ENCODE measurements at regions of chr21 and their contacts with region 1.

Region 1: GRCh38 chr21:33924079-33924765 is 8.6 kb upstream of the ATP5PO start:
- DNase-seq: peak; percentile 48 to 71
- H3K4me3 ChIP-seq: no peak overlapping the region
- H3K27ac ChIP-seq: no peak overlapping the region
- H3K4me1 ChIP-seq: no peaks in the 10 kb centered on the region
- H3K27me3 ChIP-seq: no peaks in the 10 kb centered on the region
- CTCF ChIP-seq: peak; percentile 85

Region 2: GRCh38 chr21:33959680-33960079 is 35.5 kb after region 1 on chr21:
- CTCF ChIA-PET with region 1: interaction called, 12 read pairs
- POLR2A ChIA-PET with region 1: no interaction called
- intact Hi-C with region 1: no loop called
- DNase-seq: no peak
- H3K4me3 ChIP-seq: no peak overlapping the region
- H3K27ac ChIP-seq: no peak overlapping the region
- H3K4me1 ChIP-seq: no peaks in the 10 kb centered on the region
- H3K27me3 ChIP-seq: no peaks in the 10 kb centered on the region
- CTCF ChIP-seq: no peak

Region 3: DNA sequence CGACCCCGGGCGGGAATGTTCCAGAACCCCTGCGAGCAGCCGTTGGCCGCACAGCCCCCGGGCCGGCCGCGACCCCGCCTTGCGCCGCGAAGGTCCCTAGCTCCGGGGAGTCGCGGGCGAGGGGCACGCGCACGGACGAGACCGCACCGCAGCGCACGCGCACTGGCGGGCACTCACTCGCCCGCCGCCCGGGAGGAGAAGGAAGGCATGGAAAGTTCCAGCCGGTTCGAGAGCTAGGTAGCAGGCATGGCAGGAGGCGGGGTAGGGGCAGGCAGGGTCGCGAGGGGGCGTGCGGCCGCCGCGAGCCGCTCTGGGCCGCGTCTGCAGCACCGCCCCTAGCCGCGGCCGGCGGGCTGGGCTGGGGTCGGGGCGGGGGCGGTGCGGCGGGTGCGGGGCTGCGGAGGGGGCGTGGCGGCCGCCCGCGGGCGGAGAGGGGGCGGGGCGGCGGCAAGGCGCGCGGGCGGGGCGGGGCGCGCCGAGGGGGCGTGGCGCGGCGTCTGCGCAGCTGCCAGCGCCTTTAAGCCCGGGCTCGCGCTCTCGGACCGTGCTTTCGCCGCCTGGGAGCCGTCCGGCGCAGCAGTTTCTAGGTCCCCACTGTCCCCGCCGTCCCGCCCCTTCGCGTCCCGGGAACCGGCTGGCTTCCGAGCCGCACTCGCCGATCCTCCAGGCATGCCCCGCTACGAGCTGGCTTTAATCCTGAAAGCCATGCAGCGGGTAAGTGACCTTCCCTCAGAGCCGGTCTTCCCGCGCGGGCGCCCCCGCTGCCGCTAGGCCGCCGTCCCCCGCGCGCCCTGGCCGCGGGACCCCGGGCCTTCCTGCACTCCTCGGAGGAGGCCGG is 149.0 kb after region 1 on chr21 and contains the starts of genes MRPS6 and SLC5A3:
- CTCF ChIA-PET with region 1: interaction called, 4 read pairs
- POLR2A ChIA-PET with region 1: no interaction called
- intact Hi-C with region 1: loop called (anchors 5 kb)
- DNase-seq: peak; percentile 61 to 79
- H3K4me3 ChIP-seq: peak within 1 kb of the TSS; percentile 84
- H3K27ac ChIP-seq: no peak within 1 kb of the TSS
- H3K4me1 ChIP-seq: peaks cover 22% of the 10 kb centered on the region
- H3K27me3 ChIP-seq: no peaks in the 10 kb centered on the region
- CTCF ChIP-seq: no peak
- total RNA-seq, gene MRPS6: 40.4 and 41.0 TPM in 2 replicates
- total RNA-seq, gene SLC5A3: 7.0 and 8.8 TPM in 2 replicates

Region 4: DNA sequence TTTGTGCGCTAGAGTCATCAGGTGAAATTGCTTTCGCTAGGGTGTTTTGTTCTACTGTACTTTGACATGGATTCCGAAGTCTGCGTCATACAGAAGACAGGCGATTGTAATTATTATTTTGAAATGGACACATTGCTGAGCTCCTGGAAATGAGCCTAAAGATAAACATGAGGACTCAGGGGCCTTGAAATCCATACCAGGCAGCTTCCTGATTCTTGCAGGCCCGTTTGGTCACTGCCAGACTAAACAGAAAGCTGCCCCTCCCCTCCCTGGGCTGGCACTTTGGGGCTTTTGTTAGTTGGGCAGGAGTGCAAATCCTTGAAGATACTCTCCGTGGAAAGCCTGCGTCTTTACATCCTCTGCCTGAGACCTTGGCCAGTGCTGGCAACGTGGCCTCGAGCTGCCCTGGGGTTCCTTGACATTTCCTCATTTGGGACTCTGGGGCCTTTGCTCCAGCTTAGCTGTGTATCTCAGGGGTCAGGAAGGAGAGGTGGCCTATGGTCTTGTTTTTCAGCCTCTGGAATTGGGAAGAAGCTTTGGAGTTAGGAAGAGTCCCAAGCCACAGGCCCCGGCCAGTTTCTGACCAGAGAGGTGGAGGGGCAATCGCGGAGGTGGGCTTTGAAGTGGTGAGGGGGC is 412.7 kb after region 1 on chr21:
- CTCF ChIA-PET with region 1: no interaction called
- POLR2A ChIA-PET with region 1: no interaction called
- intact Hi-C with region 1: loop called (anchors 10 kb)
- DNase-seq: no peak
- H3K4me3 ChIP-seq: no peak overlapping the region
- H3K27ac ChIP-seq: no peak overlapping the region
- H3K4me1 ChIP-seq: no peaks in the 10 kb centered on the region
- H3K27me3 ChIP-seq: 0 out of 2 replicates have a peak, but pooled peaks cover 3% of the 10 kb centered on the region
- CTCF ChIP-seq: no peak

Region 5: GRCh38 chr21:34351786-34352241 is 427.6 kb after region 1 on chr21:
- CTCF ChIA-PET with region 1: interaction called, 27 read pairs
- POLR2A ChIA-PET with region 1: no interaction called
- intact Hi-C with region 1: loop called (anchors 1 kb)
- DNase-seq: peak in 1 of 2 experiments; percentile 27
- H3K4me3 ChIP-seq: no peak overlapping the region
- H3K27ac ChIP-seq: no peak overlapping the region
- H3K4me1 ChIP-seq: no peaks in the 10 kb centered on the region
- H3K27me3 ChIP-seq: no peaks in the 10 kb centered on the region
- CTCF ChIP-seq: peak; percentile 60

Region 6: DNA sequence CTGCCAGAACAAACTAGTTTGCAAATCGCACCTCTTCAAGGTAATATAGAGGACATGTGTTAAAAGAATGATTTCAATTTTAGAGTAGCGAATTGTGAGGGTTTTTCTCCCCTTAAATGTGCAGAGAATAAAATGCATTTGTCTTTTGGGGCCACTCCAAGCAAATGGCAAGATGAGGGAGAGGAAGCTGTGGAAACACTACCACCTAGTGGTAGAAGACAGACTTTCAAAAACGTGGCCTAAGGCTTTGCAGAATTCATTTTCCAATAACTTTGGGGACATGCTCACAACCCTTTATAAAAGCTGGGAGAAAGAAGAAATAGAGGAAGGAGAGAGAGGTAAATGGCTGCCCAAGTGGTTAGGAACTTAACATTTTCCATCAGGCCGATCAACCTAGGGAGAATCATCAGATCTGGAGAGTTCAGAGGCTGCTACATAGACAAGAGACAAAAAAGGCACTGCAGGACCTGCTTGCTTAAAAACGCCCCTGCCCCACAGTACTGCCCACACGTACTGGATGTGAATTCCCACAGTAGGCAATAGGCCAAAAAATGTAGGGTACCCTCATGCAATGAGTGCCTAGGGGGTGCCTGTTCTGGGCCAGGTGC is 706.4 kb after region 1 on chr21:
- CTCF ChIA-PET with region 1: no interaction called
- POLR2A ChIA-PET with region 1: no interaction called
- intact Hi-C with region 1: loop called (anchors 10 kb)
- DNase-seq: peak in 1 of 2 experiments; percentile 17
- H3K4me3 ChIP-seq: no peak overlapping the region
- H3K27ac ChIP-seq: no peak overlapping the region
- H3K4me1 ChIP-seq: no peaks in the 10 kb centered on the region
- H3K27me3 ChIP-seq: no peaks in the 10 kb centered on the region
- CTCF ChIP-seq: peak; percentile 76

Measured in PC-9 (cell line).